Natural killer cell (primary cell): ENCODE measurements at regions of chr9 and their contacts with region 1.

Region 1: GRCh38 chr9:21031091-21031807 is at the start of gene HACD4:
- DNase-seq: peak; percentile 58 to 80
- ATAC-seq: peak; percentile 75 to 87 (median 83)
- H3K4me3 ChIP-seq: peak within 1 kb of the TSS; percentile 52
- H3K4me3 Mint-ChIP-seq: peak within 1 kb of the TSS; percentile 69
- H3K27ac ChIP-seq: peak within 1 kb of the TSS; percentile 78
- H3K27ac Mint-ChIP-seq: peak within 1 kb of the TSS in 1 of 2 donors; percentile 68
- H3K4me1 ChIP-seq: peaks cover 14% of the 10 kb centered on the region
- H3K4me1 Mint-ChIP-seq: peaks cover 24 to 32% of the 10 kb centered on the region in 2 donors
- H3K27me3 ChIP-seq: no peaks in the 10 kb centered on the region
- H3K27me3 Mint-ChIP-seq: no peaks in the 10 kb centered on the region
- CTCF ChIP-seq: no peak
- total RNA-seq, gene HACD4: 14.0 to 16.5 (median 14.4) TPM

Region 2: DNA sequence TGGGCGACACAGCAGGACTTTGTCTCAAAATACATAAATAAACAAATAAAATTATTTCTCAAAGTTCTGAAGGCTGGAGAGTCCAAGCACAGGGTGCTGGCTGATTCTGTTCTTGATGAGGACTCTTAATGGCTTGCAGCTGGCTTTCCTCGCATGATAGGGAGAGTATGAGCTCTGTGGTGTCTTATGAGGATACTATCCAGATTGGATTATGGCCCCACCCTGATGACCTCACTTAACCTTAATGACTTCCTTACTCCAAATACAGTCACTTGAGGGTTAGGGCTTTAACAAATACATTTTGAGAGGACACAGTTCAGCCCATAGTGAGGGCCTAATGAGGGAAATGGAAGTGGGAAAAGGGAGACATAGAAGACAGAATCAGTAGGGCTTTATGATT is 259.5 kb before region 1 on chr9:
- intact Hi-C with region 1: no loop called
- DNase-seq: no peak
- ATAC-seq: no peak
- H3K4me3 ChIP-seq: no peak overlapping the region
- H3K4me3 Mint-ChIP-seq: no peak overlapping the region
- H3K27ac ChIP-seq: no peak overlapping the region
- H3K27ac Mint-ChIP-seq: no peak overlapping the region
- H3K4me1 ChIP-seq: no peaks in the 10 kb centered on the region
- H3K4me1 Mint-ChIP-seq: no peaks in the 10 kb centered on the region
- H3K27me3 ChIP-seq: no peaks in the 10 kb centered on the region
- H3K27me3 Mint-ChIP-seq: no peaks in the 10 kb centered on the region
- CTCF ChIP-seq: no peak

Region 3: DNA sequence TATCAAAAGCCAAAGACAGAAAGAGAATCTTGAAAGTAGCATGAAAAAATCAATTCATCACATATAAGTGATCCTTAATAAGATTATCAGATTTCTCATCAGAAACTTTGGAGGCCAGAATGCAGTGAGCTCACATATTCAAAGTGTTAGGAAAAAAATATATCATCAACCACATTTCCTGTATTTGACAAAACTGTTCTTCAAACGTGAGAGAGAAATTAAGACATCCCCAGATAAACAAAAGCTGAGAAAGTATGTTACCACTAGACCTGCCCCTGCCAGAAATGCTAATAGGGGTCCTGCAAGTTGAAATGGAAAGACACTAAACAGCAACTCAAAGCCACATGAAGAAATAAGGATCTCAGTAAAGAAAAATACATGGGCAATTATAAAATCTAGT is 29.7 kb before region 1 on chr9:
- intact Hi-C with region 1: loop called (anchors 2 kb)
- DNase-seq: peak in 1 of 2 donors; percentile 38
- ATAC-seq: peak; percentile 79 to 85 (median 85)
- H3K4me3 ChIP-seq: no peak overlapping the region
- H3K4me3 Mint-ChIP-seq: peak overlapping the region; percentile 62
- H3K27ac ChIP-seq: peak overlapping the region; percentile 76
- H3K27ac Mint-ChIP-seq: peak overlapping the region; percentile 90 to 96
- H3K4me1 ChIP-seq: no peaks in the 10 kb centered on the region
- H3K4me1 Mint-ChIP-seq: peaks cover 30 to 38% of the 10 kb centered on the region in 2 donors
- H3K27me3 ChIP-seq: no peaks in the 10 kb centered on the region
- H3K27me3 Mint-ChIP-seq: no peaks in the 10 kb centered on the region
- CTCF ChIP-seq: no peak

Region 4: GRCh38 chr9:21016701-21017491 is 14.4 kb before region 1 on chr9:
- intact Hi-C with region 1: no loop called
- DNase-seq: no peak
- ATAC-seq: no peak
- H3K4me3 ChIP-seq: no peak overlapping the region
- H3K4me3 Mint-ChIP-seq: no peak overlapping the region
- H3K27ac ChIP-seq: no peak overlapping the region
- H3K27ac Mint-ChIP-seq: peak overlapping the region in 1 of 2 donors; percentile 6
- H3K4me1 ChIP-seq: no peaks in the 10 kb centered on the region
- H3K4me1 Mint-ChIP-seq: peaks cover 9 to 21% of the 10 kb centered on the region in 2 donors
- H3K27me3 ChIP-seq: no peaks in the 10 kb centered on the region
- H3K27me3 Mint-ChIP-seq: no peaks in the 10 kb centered on the region
- CTCF ChIP-seq: no peak

Region 5: GRCh38 chr9:21096172-21096900 is 65.1 kb after region 1 on chr9:
- intact Hi-C with region 1: loop called (anchors 1 kb)
- DNase-seq: peak; percentile 23 to 85
- ATAC-seq: peak; percentile 96 to 98 (median 96)
- H3K4me3 ChIP-seq: peak overlapping the region; percentile 16
- H3K4me3 Mint-ChIP-seq: peak overlapping the region; percentile 86
- H3K27ac ChIP-seq: peak overlapping the region; percentile 86
- H3K27ac Mint-ChIP-seq: peak overlapping the region; percentile 96 to 97
- H3K4me1 ChIP-seq: peaks cover 13% of the 10 kb centered on the region
- H3K4me1 Mint-ChIP-seq: peaks cover 35 to 37% of the 10 kb centered on the region in 2 donors
- H3K27me3 ChIP-seq: no peaks in the 10 kb centered on the region
- H3K27me3 Mint-ChIP-seq: no peaks in the 10 kb centered on the region
- CTCF ChIP-seq: no peak